HepG2 (cell line): ENCODE measurements at regions of chr14 and their contacts with region 1.

Region 1: DNA sequence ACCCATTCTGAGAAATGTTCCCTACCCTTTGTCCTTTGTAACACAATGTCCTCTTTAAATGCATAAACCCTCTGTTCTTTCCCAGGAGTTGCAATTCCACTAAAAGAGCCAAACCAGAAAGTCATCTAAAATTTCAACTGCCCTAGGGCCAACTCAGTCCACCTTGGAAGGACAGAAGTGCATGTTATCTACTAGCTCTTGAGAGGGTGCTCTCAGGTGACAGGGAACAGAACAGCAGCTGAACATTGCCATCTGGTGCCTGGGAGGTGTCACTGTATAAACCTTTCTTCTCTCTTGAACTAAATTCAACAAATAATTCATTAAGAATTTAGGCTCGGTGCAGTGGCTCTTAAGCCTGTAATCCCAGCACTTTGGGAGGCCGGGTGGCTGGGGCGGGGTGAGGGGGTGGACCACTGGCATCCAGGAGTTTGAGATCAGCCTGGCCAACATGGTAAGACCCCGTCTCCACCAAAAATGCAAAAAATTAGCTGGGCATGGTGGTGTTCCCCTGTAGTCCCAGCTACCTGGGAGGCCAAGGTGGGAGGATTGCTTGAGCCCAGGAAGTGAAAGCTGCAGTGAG is 10.3 kb upstream of the FERMT2 start:
- DNase-seq: peak; percentile 70
- ATAC-seq: peak; percentile 96
- H3K4me3 ChIP-seq: peak overlapping the region in 1 of 3 experiments; percentile 21; a peak in 1 of 6 replicates
- H3K27ac ChIP-seq: no peak overlapping the region
- H3K4me1 ChIP-seq: peaks cover 31% of the 10 kb centered on the region
- H3K27me3 ChIP-seq: 0 out of 5 replicates have a peak, but pooled peaks cover 0 to 9% of the 10 kb centered on the region in 2 experiments
- CTCF ChIP-seq: peak; percentile 85
- EP300 ChIP-seq: no peak
- POLR2A ChIP-seq: no peak
- RAD21 ChIP-seq: peak; percentile 81

Region 2: DNA sequence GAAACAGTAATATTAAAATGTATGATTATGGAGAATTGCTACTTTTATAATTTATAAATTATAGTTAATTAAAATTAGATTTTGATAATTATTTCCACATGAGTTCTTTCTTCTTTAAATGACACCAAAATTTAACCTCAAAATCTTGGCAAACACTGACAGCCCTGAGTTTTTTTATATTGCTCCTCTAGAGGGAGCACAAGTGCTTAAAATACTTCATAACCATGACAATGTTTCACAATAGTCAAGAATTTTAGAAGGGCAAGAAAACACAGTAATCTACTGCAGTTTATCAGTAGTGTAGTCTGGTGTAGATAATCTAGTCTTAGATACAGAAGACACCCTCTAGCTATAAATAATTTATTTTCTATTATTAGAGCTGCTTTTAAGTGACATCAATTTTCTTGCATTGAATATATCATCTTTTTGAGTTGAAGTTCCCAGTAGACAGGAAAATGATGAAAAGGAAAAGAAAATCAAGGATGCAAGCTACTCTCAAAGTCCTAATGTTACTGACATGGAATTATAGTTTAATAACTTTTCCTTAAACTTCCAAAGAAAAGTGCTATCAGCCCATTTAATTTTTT is 661.4 kb before region 1 on chr14:
- CTCF ChIA-PET with region 1: no interaction called
- POLR2A ChIA-PET with region 1: no interaction called
- in situ Hi-C with region 1: no loop called
- intact Hi-C with region 1: loop called (anchors 10 kb)
- DNase-seq: peak; percentile 59
- ATAC-seq: 0 out of 3 replicates have a peak, but pooled peaks have one; percentile 30
- H3K4me3 ChIP-seq: no peak overlapping the region
- H3K27ac ChIP-seq: no peak overlapping the region
- H3K4me1 ChIP-seq: no peaks in the 10 kb centered on the region
- H3K27me3 ChIP-seq: peaks cover 0 to 4% of the 10 kb centered on the region in 2 experiments; a peak in 1 of 5 replicates
- CTCF ChIP-seq: peak; percentile 66
- EP300 ChIP-seq: no peak
- POLR2A ChIP-seq: no peak
- RAD21 ChIP-seq: peak; percentile 19; the same call in 1 of the 2 replicates

Region 3: DNA sequence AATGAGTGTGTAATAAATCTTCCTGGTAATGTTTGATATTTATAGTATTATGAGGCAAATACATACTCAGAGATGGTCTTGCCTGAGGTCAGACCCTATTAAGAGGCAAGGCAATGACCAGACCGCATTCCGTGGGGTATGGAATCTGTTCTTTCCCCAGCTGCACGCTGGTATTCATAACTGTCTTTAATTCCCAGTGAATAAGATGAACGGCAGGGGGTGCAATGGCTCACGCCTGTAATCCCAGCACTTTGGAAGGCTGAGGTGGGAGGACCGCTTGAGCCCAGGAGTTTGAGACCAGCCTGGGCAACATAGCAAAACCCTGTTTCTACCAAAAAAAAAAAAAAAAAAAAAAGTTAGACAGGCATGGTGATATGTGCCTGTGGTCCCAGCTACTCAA is 310.4 kb before region 1 on chr14:
- CTCF ChIA-PET with region 1: interaction called, 6 read pairs
- POLR2A ChIA-PET with region 1: no interaction called
- in situ Hi-C with region 1: no loop called
- intact Hi-C with region 1: loop called (anchors 1 kb)
- DNase-seq: peak; percentile 26
- ATAC-seq: peak; percentile 85
- H3K4me3 ChIP-seq: no peak overlapping the region
- H3K27ac ChIP-seq: no peak overlapping the region
- H3K4me1 ChIP-seq: no peaks in the 10 kb centered on the region
- H3K27me3 ChIP-seq: no peaks in the 10 kb centered on the region
- CTCF ChIP-seq: peak; percentile 72
- EP300 ChIP-seq: no peak
- POLR2A ChIP-seq: no peak
- RAD21 ChIP-seq: no peak

Region 4: GRCh38 chr14:52824507-52824906 is 136.6 kb before region 1 on chr14:
- CTCF ChIA-PET with region 1: interaction called, 12 read pairs
- POLR2A ChIA-PET with region 1: no interaction called
- in situ Hi-C with region 1: loop called (anchors 5 kb)
- intact Hi-C with region 1: loop called (anchors 1 kb)
- DNase-seq: no peak
- ATAC-seq: no peak
- H3K4me3 ChIP-seq: no peak overlapping the region
- H3K27ac ChIP-seq: no peak overlapping the region
- H3K4me1 ChIP-seq: peaks cover 68% of the 10 kb centered on the region
- H3K27me3 ChIP-seq: no peaks in the 10 kb centered on the region
- CTCF ChIP-seq: no peak
- EP300 ChIP-seq: no peak
- POLR2A ChIP-seq: no peak
- RAD21 ChIP-seq: no peak

Region 5: DNA sequence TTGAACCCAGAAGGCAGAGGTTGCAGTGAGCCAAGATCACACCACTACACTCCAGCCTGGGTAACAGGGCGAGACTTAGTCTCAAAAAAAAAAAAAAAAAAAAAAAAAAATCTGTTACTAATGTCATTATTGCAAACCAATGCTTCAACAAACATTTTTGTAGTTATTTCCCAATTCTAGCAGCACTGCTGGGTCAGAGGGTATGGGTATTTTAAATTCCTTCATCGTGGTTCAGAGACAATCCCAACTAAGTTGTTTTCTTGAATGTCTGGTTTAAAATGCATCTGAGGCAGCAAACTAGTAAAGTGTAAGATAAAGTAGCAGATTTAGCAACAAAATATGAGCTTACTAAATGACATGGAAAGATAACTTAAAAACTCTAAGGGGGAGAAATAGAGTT is 75.9 kb before region 1 on chr14:
- CTCF ChIA-PET with region 1: no interaction called
- POLR2A ChIA-PET with region 1: no interaction called
- in situ Hi-C with region 1: no loop called
- intact Hi-C with region 1: no loop called
- DNase-seq: no peak
- ATAC-seq: no peak
- H3K4me3 ChIP-seq: no peak overlapping the region
- H3K27ac ChIP-seq: no peak overlapping the region
- H3K4me1 ChIP-seq: no peaks in the 10 kb centered on the region
- H3K27me3 ChIP-seq: no peaks in the 10 kb centered on the region
- CTCF ChIP-seq: no peak
- EP300 ChIP-seq: no peak
- POLR2A ChIP-seq: no peak
- RAD21 ChIP-seq: no peak

Region 6: GRCh38 chr14:52923902-52924575 is 37.1 kb before region 1 on chr14:
- CTCF ChIA-PET with region 1: interaction called, 8 read pairs
- POLR2A ChIA-PET with region 1: interaction called, 4 read pairs
- in situ Hi-C with region 1: no loop called
- intact Hi-C with region 1: loop called (anchors 2 kb)
- DNase-seq: peak; percentile 43
- ATAC-seq: peak; percentile 77
- H3K4me3 ChIP-seq: no peak overlapping the region
- H3K27ac ChIP-seq: no peak overlapping the region
- H3K4me1 ChIP-seq: peaks cover 96% of the 10 kb centered on the region
- H3K27me3 ChIP-seq: no peaks in the 10 kb centered on the region
- CTCF ChIP-seq: peak; percentile 80
- EP300 ChIP-seq: no peak
- POLR2A ChIP-seq: no peak
- RAD21 ChIP-seq: peak; percentile 63

Region 7: DNA sequence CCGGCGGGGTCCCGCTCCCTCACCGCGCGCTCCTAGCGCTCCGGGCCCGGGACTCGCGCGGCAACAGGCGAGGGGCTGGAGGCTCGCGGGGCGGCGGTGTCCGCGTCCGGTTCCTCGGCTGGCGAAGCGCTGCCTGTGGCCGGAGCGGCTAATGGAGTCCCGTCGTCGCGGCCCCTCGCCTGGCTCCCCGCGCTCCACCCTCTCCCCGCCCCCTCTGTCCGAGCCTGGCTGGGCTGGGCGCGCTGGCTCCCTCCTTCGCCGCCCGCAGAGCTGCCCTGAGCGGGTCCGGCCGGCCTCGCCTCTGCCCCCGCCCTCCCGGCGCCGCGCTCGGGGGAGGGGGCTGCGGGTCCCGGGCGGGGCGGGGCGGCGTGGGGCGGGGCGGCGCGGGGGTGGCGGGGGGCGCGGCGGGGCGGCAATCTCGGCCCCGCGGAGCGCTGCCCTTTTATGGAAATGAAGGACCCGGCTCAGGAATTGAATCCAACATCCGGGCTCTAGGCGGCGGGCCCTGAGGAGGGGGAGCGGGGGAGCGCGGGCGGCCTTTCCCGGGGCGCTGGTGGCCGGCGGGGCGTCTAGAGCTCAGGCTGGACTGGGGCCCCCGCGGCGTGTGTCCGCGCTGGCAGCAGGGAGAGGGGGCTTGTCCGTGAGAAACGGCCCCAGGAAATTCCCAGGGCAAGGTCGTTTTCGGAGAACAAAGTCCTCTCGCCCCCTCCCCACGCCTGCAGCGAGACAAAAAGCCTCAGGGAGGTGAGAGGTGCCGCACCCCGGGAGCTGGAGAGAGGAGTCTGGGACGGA is 10.1 kb before region 1 on chr14 and contains the start of gene FERMT2:
- CTCF ChIA-PET with region 1: no interaction called
- POLR2A ChIA-PET with region 1: interaction called, 21 read pairs
- in situ Hi-C with region 1: no loop called
- intact Hi-C with region 1: no loop called
- DNase-seq: peak; percentile 79
- ATAC-seq: peak; percentile 92
- H3K4me3 ChIP-seq: peak within 1 kb of the TSS; percentile 85 to 95 (median 92)
- H3K27ac ChIP-seq: peak within 1 kb of the TSS; percentile 96
- H3K4me1 ChIP-seq: peaks cover 52% of the 10 kb centered on the region
- H3K27me3 ChIP-seq: no peaks in the 10 kb centered on the region; a peak in 1 of 5 replicates
- CTCF ChIP-seq: no peak; the same call in 1 of the 2 replicates
- EP300 ChIP-seq: no peak
- POLR2A ChIP-seq: peak; percentile 57 to 85
- RAD21 ChIP-seq: peak; percentile 65
- total RNA-seq, gene FERMT2: 60.4 and 86.5 TPM in 2 replicates

Region 8: DNA sequence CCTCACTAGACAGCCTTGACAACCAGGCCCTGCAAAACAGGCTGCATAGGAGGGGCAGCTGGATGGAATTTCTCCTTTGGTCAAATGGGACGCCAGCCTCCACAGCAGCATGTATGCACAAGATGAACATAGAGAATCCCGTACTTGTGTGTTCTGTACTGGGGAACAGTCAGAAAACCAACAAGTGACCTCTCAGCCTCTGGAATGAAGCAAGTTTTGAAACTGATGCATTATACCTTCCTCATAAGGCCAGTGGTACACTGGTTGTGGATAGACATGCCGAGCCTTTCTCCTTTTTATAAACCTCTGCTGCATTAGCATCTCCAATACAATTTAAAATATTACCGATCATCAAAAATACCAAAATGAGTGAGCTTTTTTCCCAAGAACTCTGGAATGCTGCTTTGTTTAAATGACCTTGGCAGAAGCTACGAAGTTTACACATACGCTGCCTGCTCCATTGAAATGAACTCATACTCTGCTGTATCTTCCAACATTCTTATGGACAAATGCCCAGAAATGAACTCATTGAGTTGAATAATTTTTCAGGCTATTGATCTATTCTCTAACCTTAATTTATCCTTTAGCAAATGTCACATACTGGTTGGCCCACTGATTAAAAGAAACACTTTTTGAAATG is 37.3 kb after region 1 on chr14:
- CTCF ChIA-PET with region 1: no interaction called
- POLR2A ChIA-PET with region 1: no interaction called
- in situ Hi-C with region 1: no loop called
- intact Hi-C with region 1: no loop called
- DNase-seq: peak; percentile 30
- ATAC-seq: peak; percentile 21; the same call in 1 of the 3 replicates
- H3K4me3 ChIP-seq: no peak overlapping the region
- H3K27ac ChIP-seq: no peak overlapping the region
- H3K4me1 ChIP-seq: peaks cover 40% of the 10 kb centered on the region
- H3K27me3 ChIP-seq: peaks cover 0 to 20% of the 10 kb centered on the region in 2 experiments; a peak in 2 of 5 replicates
- CTCF ChIP-seq: no peak
- EP300 ChIP-seq: no peak
- POLR2A ChIP-seq: no peak
- RAD21 ChIP-seq: no peak

Region 9: DNA sequence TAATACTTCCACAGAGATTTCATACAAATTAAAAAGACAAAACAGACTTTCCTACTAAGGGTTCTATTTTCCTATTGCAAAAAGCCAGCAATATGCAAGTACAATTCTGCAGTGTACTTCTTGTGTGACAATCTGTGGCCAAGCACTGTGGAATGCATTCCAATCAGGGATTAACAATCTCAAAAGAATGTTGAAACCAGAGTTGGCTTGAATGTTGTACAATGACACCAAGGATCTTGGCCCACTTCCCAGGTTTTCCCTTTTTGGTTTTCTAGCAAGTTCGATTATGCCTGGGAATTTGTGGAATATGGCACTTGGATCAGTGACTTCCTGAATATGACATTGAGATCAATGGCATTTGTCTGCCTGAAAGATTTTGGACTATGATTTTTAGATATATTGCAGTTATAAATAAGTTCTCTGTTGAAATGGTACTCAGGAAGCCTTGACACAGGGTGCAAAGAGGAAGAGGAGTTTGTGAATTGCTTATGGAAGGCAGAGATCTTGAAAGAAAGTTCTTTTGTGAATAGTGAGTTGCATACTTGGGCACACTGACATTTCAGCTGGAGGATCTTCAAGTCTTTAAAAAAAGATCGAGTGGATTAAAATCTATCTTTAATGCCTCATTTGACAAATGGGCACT is 71.1 kb after region 1 on chr14:
- CTCF ChIA-PET with region 1: no interaction called
- POLR2A ChIA-PET with region 1: no interaction called
- in situ Hi-C with region 1: no loop called
- intact Hi-C with region 1: no loop called
- DNase-seq: peak; percentile 69
- ATAC-seq: peak; percentile 64
- H3K4me3 ChIP-seq: no peak overlapping the region
- H3K27ac ChIP-seq: no peak overlapping the region
- H3K4me1 ChIP-seq: peaks cover 17% of the 10 kb centered on the region
- H3K27me3 ChIP-seq: no peaks in the 10 kb centered on the region
- CTCF ChIP-seq: no peak
- EP300 ChIP-seq: no peak
- POLR2A ChIP-seq: no peak
- RAD21 ChIP-seq: no peak

Region 10: DNA sequence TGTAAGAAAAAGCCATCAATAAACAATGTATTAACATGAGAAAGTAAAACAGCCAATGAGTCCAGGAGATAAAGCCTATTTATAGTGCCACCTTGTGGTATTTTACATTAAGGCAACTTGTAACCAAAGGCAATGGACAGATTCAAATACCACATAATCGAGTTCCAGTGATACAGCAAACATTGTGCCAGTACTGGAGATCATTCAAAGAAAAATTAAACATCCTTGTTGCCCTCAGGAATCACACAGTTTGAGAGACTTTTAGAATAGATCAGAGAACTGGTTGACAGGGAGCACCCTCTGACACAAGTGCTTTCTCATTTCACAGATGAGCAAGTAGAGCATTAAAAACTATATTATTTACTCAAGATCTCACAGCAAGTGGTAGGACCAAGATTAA is 93.9 kb after region 1 on chr14:
- CTCF ChIA-PET with region 1: no interaction called
- POLR2A ChIA-PET with region 1: interaction called, 3 read pairs
- in situ Hi-C with region 1: no loop called
- intact Hi-C with region 1: loop called (anchors 2 kb)
- DNase-seq: peak; percentile 38
- ATAC-seq: peak; percentile 65
- H3K4me3 ChIP-seq: no peak overlapping the region
- H3K27ac ChIP-seq: no peak overlapping the region
- H3K4me1 ChIP-seq: no peaks in the 10 kb centered on the region
- H3K27me3 ChIP-seq: no peaks in the 10 kb centered on the region
- CTCF ChIP-seq: peak; percentile 78
- EP300 ChIP-seq: no peak
- POLR2A ChIP-seq: no peak
- RAD21 ChIP-seq: peak; percentile 35; the same call in 1 of the 2 replicates